Testis (tissue), 5 donors: ENCODE measurements at regions of chr19 and their contacts with region 1.

Region 1: DNA sequence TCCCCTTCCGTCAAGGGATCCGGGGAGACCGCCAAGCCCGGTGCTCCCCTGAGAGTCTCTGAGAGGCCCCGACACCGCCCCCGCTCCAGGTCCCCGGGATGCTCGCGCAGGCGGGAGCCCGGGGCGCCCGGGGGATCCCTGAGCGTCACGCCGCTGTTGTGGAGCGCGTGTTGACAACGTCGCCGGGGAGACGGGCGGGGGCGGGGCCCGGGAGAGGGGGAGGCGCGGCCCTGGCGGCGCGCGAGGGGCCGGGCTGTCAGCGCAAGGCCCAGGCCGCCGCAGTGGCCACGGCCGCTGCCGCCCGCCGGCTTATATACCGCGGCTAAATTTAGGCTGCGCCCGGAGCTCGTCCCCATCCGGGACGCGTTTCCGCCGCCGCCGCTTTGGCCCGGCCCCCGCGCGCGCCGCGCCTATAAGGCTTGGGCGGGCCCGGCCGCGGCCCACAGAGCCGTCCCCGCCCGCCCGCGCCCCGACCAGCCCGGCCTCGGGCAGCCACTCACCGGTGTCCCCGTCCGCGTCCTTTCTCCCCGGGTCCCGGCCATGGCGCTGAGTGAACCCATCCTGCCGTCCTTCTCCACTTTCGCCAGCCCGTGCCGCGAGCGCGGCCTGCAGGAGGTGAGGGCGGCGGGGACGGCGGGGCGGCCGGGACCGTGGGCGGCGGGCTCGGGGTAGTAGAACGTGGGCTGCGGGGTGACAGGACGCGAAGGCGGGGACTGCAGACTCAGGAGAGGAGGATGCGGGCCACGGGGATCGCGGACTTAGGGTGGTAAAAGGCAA is at the start of gene KLF2:
- DNase-seq: peak; percentile 91
- H3K4me3 ChIP-seq: peak within 1 kb of the TSS; percentile 94 to 96
- H3K27ac ChIP-seq: peak within 1 kb of the TSS; percentile 96
- H3K4me1 ChIP-seq: peaks cover 33% of the 10 kb centered on the region
- H3K27me3 ChIP-seq: no peaks in the 10 kb centered on the region
- CTCF ChIP-seq: no peak
- POLR2A ChIP-seq: peak; percentile 63
- total RNA-seq, gene KLF2: 42.4 to 74.9 TPM

Region 2: GRCh38 chr19:16259385-16260159 is 65.0 kb before region 1 on chr19:
- intact Hi-C with region 1: loop called (anchors 10 kb)
- DNase-seq: no peak
- H3K4me3 ChIP-seq: no peak overlapping the region
- H3K27ac ChIP-seq: peak overlapping the region; percentile 39 to 43
- H3K4me1 ChIP-seq: peaks cover 37% of the 10 kb centered on the region
- H3K27me3 ChIP-seq: no peaks in the 10 kb centered on the region
- CTCF ChIP-seq: no peak
- POLR2A ChIP-seq: no peak